Activated T-helper 2 cell treated with anti-CD3 and anti-CD28 coated beads, Interferon-gamma antibody, Interleukin-2, Interleukin-4, amounts not matched to agents 10 μg/mL and 5 μg/mL and 100 μg/mL, durations not matched to agents 14 hours and 24 hours and 36 hours (primary cell): ENCODE measurements at regions of chr1 and their contacts with region 1.

Region 1: DNA sequence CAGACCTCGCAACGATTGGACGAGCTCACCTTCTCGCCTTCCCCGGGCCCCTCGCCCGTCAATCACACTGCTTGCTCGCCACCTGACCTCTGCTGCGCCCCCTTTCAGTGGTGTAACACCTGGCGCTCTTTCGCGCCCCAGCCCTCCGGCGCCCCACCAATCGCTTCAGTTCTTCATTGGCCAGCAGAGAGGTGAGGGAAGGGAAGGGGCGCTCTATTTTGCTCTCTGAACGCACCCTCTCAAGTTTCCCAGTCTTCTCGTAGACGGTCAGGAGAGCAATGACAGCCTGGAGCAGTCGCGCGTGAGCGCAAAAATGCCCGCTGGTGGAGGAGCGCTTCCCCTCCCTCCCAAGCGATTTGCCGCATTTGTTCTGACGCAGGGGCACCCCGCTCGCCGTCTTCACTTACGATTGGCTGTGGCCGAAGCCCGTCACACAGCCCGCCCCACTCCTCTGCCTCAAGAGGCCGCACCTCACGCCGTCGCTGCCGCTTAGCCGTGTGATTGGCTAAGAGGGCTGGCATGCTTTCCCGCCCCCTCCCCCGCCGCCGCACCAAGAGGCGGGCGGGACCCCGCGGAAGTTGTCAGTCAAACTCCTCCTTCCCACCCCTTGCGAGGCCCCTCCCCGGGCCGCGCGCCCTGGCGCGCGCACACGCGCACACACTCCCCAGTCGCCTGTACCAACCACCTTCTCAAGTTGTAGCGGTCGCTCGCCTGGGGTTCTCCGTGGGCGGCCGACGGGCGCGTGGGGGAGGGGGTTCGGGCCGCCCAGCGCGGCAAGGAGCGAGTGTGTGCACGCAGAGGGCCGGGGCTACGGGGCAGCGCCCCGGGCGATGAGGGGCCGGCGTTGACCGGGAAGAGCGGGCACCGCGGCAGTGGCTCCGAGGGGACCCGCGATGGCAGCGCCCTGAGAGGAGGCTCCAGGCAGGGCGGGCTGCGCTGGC is at the start of gene PPP2R5A:
- DNase-seq: peak; percentile 99
- H3K4me3 Mint-ChIP-seq: peak within 1 kb of the TSS; percentile 98
- H3K27ac Mint-ChIP-seq: peak within 1 kb of the TSS; percentile 97
- H3K4me1 Mint-ChIP-seq: peaks cover 27% of the 10 kb centered on the region
- H3K27me3 Mint-ChIP-seq: no peaks in the 10 kb centered on the region
- total RNA-seq, gene PPP2R5A: 40.4 and 42.1 TPM in 2 replicates

Region 2: GRCh38 chr1:211830330-211831142 is 454.5 kb before region 1 on chr1 and contains the start of gene LPGAT1:
- intact Hi-C with region 1: loop called (anchors 10 kb)
- DNase-seq: peak; percentile 67
- H3K4me3 Mint-ChIP-seq: peak within 1 kb of the TSS; percentile 92
- H3K27ac Mint-ChIP-seq: peak within 1 kb of the TSS; percentile 78
- H3K4me1 Mint-ChIP-seq: peaks cover 55% of the 10 kb centered on the region
- H3K27me3 Mint-ChIP-seq: peaks cover 6% of the 10 kb centered on the region
- total RNA-seq, gene LPGAT1: 27.8 and 31.1 TPM in 2 replicates

Region 3: DNA sequence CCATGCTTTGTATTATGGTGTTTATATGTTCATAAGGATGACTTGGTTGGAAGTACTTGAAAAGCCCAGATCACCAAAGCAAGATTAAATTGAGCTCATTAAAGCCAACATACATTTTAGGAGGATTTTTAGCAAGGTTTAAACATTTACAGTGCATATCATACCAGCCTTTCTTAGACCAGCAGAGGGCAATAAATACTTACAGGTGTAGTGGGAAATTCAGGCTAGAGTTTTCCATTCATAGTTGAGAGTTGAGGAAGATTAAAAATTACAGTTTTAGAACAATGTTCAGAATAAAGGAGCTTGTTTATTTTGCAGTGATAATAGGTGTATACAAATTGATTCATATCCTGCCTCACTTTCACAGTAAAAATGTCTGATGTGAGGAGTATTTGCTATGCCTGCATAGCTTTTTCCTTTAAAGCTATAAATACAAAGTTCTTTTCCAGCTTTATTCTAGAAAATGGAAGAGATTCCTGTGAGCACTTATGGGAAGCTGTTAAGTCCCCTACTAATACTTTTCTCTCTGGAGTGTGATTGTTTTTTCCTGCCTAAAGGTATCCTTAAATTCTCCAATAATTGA is 214.2 kb before region 1 on chr1:
- intact Hi-C with region 1: loop called (anchors 2 kb)
- DNase-seq: no peak
- H3K4me3 Mint-ChIP-seq: no peak overlapping the region
- H3K27ac Mint-ChIP-seq: no peak overlapping the region
- H3K4me1 Mint-ChIP-seq: peaks cover 4% of the 10 kb centered on the region
- H3K27me3 Mint-ChIP-seq: no peaks in the 10 kb centered on the region

Region 4: DNA sequence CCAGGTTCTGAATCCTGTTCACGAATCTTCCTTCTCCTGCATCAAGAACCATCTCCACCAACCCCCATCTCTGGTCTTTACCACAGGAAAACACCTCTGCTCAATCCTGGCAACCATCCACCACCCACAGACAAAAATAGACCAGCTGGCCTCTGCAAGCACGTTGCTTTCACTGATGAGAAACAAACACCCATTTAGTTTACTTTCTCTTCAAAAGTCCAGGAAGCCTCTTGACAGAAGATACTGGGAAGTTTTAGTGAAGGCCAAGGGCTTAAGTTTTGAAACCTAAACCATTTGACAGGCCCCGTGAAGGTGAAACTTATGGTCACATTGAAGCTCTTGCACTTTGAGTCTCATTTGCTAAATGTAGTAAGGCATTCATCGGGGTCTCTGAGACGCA is 122.4 kb before region 1 on chr1:
- intact Hi-C with region 1: loop called (anchors 1 kb)
- DNase-seq: peak; percentile 17
- H3K4me3 Mint-ChIP-seq: no peak overlapping the region
- H3K27ac Mint-ChIP-seq: peak overlapping the region; percentile 7
- H3K4me1 Mint-ChIP-seq: peaks cover 27% of the 10 kb centered on the region
- H3K27me3 Mint-ChIP-seq: no peaks in the 10 kb centered on the region

Region 5: GRCh38 chr1:212302745-212303383 is 17.9 kb after region 1 on chr1:
- intact Hi-C with region 1: loop called (anchors 2 kb)
- DNase-seq: no peak
- H3K4me3 Mint-ChIP-seq: no peak overlapping the region
- H3K27ac Mint-ChIP-seq: peak overlapping the region; percentile 39
- H3K4me1 Mint-ChIP-seq: peaks cover 26% of the 10 kb centered on the region
- H3K27me3 Mint-ChIP-seq: no peaks in the 10 kb centered on the region

Region 6: DNA sequence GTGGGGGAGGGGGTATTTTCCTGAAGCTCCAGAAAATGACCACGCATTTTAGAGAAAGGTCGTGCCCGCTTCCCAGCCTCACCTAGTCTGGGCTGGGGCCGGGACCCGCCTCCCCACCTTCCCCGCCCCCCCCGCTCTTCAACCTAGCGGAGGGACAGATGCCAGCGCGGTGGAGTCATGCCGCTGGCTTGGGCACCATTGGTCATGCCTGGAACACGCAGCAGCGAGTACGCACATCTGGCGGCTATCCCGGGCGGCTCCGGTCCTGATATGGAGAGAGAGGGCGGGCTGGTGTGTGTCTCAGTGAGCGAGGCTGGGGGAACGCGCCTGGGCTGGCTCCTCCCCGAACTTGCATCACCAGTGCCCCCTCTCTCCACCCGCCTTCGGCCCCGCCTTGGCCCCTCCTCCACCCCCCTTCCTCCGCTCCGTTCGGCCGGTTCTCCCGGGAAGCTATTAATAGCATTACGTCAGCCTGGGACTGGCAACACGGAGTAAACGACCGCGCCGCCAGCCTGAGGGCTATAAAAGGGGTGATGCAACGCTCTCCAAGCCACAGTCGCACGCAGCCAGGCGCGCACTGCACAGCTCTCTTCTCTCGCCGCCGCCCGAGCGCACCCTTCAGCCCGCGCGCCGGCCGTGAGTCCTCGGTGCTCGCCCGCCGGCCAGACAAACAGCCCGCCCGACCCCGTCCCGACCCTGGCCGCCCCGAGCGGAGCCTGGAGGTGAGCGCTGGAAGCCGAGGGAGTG is 323.4 kb after region 1 on chr1 and contains the start of gene ATF3:
- intact Hi-C with region 1: loop called (anchors 2 kb)
- DNase-seq: peak; percentile 88
- H3K4me3 Mint-ChIP-seq: peak within 1 kb of the TSS; percentile 88
- H3K27ac Mint-ChIP-seq: peak within 1 kb of the TSS; percentile 91
- H3K4me1 Mint-ChIP-seq: peaks cover 44% of the 10 kb centered on the region
- H3K27me3 Mint-ChIP-seq: peaks cover 39% of the 10 kb centered on the region
- total RNA-seq, gene ATF3: 17.9 and 23.9 TPM in 2 replicates